RWPE1 (cell line): ENCODE measurements at regions of chr15 and their contacts with region 1.

Region 1: DNA sequence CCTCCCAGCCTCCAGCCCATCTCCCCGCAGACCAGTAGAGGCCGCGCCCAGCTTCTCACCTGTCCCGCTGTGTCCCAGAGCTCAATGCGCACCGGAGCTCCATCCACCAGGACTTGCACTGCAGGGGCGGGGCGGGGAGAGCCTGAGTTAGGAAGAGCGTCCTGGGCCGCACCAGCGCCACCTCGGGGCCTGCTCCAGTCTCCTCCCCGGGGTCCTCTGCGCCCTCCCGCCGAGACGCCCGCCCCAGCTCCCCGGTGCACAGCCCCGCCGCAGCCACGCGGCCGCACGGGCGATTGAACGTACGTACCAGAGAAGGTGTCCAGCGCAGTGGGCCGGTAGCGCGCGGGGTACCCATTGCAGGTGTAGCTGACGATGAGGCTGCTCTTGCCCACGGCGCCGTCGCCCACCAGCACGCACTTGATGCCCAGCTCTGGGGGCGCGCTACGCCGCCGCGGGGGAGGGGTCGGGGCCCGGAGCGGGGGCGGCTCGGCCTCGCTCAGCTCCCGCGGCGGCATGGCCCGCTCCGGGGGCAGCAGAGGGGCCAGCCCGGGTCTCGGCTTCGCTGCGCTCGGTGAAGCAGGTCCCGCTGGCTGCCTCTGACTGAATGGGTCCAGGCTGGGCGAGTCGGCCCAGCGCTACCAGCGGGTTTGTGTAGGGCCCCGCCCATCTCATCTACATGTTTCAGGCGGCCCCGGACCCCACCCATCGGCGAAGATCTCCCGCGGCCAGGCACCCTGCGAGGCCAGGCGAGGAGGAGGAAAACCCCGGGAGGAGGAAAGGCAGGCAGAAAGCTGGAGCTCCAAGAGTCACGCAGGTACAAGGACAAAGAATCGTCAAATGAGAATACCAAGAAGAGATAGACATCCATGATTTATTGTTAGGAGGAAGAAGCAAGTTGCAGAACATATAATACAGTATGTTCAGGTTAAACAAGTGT is at the start of gene RHOV:
- DNase-seq: peak; percentile 74
- H3K27ac ChIP-seq: peak within 1 kb of the TSS; percentile 29; the same call in 1 of the 2 replicates
- CTCF ChIP-seq: no peak; the same call in 1 of the 2 replicates

Region 2: DNA sequence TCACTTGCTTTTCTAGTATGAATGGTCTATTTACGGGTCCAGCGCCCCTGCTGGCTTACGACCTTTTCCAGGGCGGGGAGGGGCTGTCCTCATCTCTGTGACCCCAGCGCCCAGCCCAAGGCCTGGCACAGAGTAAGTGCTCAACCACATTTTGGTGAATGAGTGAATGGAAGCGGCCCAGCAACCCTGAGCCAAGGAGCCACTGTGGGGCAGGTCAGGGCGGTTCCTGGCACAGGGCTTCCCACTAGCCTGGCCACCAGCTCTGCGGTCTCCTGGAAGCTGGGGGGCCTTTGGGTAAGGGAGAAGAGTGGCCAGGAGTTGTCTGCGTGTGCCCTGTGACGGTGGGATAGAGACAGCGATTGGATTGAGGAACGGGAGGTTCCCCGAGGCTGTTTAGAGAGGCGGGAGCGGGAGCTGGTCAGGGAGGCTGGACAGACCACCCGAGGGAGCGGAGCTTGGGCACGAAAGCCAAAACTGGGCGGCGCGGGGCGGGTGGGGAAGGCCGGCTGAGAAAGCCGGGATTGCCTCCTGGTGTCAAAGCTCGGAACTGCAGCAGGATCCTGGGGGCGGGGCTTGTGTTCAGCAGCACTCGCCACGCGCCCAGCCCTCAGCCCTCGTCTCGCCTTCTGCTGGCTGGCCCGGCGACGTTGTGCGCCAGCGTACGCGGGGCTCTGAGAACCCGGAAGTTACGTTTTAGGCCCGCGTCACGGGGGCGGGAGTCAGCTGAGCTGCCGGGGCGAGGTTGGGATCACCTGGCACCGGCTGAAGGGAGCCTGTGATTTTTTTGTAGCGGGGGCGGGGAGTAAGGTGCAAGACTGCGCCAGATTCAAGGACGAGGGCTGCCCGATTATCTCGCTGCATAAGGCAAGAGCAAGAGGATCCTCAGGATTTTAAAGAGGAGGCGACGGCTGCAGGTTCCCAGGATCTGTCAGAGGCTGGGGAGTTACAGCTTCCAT is 20.1 kb after region 1 on chr15 and contains the start of gene VPS18:
- CTCF ChIA-PET with region 1: interaction called, 14 read pairs
- POLR2A ChIA-PET with region 1: interaction called, 3 read pairs
- DNase-seq: peak; percentile 92
- H3K27ac ChIP-seq: peak within 1 kb of the TSS; percentile 89
- CTCF ChIP-seq: peak; percentile 98